Activated B cell treated with CpG ODN at 0.5 μM for 24 hours (primary cell): ENCODE measurements at regions of chr16 and their contacts with region 1.

Region 1: GRCh38 chr16:19348578-19349315 is 63.2 kb downstream of the CLEC19A start:
- DNase-seq: no peak
- ATAC-seq: no peak
- H3K4me3 Mint-ChIP-seq: no peak overlapping the region
- H3K27ac Mint-ChIP-seq: no peak overlapping the region
- H3K4me1 Mint-ChIP-seq: no peaks in the 10 kb centered on the region
- H3K27me3 Mint-ChIP-seq: peaks cover 17% of the 10 kb centered on the region
- CTCF ChIP-seq: no peak

Region 2: GRCh38 chr16:19294156-19294649 is 54.5 kb before region 1 on chr16:
- CTCF ChIA-PET with region 1: no interaction called
- POLR2A ChIA-PET with region 1: no interaction called
- intact Hi-C with region 1: loop called (anchors 10 kb)
- DNase-seq: peak; percentile 18
- ATAC-seq: peak; percentile 88
- H3K4me3 Mint-ChIP-seq: peak overlapping the region; percentile 42
- H3K27ac Mint-ChIP-seq: peak overlapping the region; percentile 84
- H3K4me1 Mint-ChIP-seq: peaks cover 29% of the 10 kb centered on the region
- H3K27me3 Mint-ChIP-seq: peaks cover 7% of the 10 kb centered on the region
- CTCF ChIP-seq: no peak

Region 3: DNA sequence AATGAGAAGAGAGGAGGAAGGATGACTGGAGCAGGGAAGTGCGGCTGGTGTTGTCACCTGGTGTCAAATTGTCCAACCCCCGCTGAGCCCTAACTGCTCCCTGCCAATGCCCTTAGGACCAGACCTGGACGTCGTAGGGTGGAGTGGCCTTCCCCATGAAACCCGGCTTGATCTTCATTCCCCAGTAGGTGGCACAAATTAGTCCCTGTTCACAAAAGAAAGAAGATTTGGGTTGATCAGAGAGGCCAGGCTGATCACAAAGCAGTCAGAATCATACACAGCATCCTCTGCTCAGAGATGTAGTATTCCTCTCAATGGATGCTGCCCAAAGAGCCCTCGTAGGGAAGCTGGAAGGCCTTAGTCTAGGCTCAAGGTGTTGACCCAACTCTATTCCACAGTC is 1288.5 kb after region 1 on chr16:
- CTCF ChIA-PET with region 1: no interaction called
- POLR2A ChIA-PET with region 1: no interaction called
- intact Hi-C with region 1: no loop called
- DNase-seq: no peak
- ATAC-seq: no peak
- H3K4me3 Mint-ChIP-seq: no peak overlapping the region
- H3K27ac Mint-ChIP-seq: no peak overlapping the region
- H3K4me1 Mint-ChIP-seq: no peaks in the 10 kb centered on the region
- H3K27me3 Mint-ChIP-seq: no peaks in the 10 kb centered on the region
- CTCF ChIP-seq: no peak